ENCODE measurements at regions of chr6 and their contacts with region 1.

Region 1: GRCh38 chr6:53171605-53172446 is 23.2 kb upstream of the GCM1 start:
- DNase-seq: peak; percentile 73
- ATAC-seq: peak; percentile 100
- H3K4me3 ChIP-seq: no peak overlapping the region
- H3K27ac ChIP-seq: no peak overlapping the region
- H3K4me1 ChIP-seq: peaks cover 4% of the 10 kb centered on the region; the same call in 1 of the 2 replicates
- H3K27me3 ChIP-seq: no peaks in the 10 kb centered on the region; the same call in 1 of the 2 replicates
- CTCF ChIP-seq: peak; percentile 100
- POLR2A ChIP-seq: peak; percentile 70
- RAD21 ChIP-seq: peak; percentile 100

Region 2: DNA sequence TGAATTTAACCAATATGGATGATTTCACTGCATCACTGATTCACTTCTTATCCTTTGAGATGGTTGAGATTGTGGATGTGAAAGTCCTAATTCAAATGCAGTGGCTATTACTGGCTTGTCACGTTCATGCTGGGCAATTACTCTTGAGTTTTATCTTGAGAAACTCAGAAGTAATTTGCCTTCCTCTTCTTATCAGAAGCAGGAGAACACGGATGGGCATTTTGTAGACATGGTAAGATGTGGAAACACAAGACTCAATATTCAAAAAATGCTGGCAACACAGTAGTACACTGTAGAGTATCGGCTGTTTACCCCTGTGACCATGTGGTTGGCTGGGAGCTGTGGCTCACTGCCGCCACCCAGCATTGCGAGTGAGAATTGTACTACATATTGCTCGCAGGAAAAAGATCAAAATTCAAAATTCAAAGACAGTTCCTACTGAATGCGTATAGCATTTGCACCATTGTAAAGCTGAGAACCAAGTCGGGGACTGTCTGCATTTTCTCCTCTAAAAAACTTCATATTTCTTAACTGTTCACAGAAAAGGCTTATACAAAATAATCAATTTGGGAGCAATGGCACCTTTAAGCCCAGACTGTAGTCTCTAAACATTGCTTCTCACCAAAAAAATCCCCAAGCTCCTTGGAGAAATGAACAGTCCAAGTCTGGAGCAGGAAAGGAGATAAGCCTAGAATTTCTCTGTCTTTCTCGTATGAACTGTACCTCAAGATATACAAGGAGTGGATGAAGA is 238.9 kb after region 1 on chr6:
- CTCF ChIA-PET with region 1: interaction called, 8 read pairs
- POLR2A ChIA-PET with region 1: no interaction called
- dilution Hi-C with region 1: no loop called
- in situ Hi-C with region 1: no loop called
- intact Hi-C with region 1: loop called (anchors 2 kb)
- DNase-seq: peak; percentile 33
- ATAC-seq: peak; percentile 91
- H3K4me3 ChIP-seq: no peak overlapping the region
- H3K27ac ChIP-seq: no peak overlapping the region
- H3K4me1 ChIP-seq: no peaks in the 10 kb centered on the region
- H3K27me3 ChIP-seq: peaks cover 32% of the 10 kb centered on the region
- CTCF ChIP-seq: peak; percentile 62
- POLR2A ChIP-seq: no peak
- RAD21 ChIP-seq: peak; percentile 72

Region 3: DNA sequence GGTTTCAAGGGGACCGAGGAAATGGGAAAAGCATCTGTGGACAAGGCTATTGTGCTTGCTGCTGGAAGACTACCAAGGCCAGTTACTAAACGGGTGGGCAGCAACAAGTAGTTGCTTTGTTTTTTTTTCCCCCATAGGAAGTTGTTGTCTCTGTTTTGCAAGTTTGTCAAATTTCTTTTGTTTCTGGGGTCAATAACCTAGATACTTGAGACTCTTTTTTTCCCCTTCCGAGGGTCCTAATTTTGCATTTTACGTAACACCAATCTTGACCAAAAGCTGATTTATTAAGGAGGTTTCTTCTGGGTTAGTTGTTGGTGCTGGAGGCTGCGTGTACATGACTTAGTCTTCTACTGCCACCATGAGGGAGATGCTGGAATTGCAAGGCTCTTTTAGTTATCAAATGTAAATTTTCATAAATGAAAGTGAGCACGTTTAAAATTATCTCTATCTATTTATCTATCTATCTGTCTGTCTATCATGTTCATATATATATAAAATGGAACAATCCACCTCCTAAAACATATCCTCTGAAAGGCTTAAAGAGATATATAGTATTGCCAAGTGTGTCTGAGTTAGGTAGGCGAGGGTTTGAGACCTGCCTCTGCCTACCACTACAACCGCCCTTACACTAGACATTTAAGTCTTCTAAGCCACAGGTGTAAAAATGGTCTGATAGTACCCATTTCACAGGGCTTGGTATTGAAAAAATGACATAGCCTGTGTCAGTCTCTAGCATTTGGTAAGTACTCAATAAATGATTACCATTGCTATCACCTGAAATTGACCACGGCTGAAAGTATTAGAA is 312.9 kb after region 1 on chr6:
- CTCF ChIA-PET with region 1: interaction called, 7 read pairs
- POLR2A ChIA-PET with region 1: no interaction called
- dilution Hi-C with region 1: no loop called
- in situ Hi-C with region 1: loop called (anchors 5 kb)
- intact Hi-C with region 1: loop called (anchors 1 kb)
- DNase-seq: peak; percentile 75
- ATAC-seq: peak; percentile 88
- H3K4me3 ChIP-seq: no peak overlapping the region
- H3K27ac ChIP-seq: no peak overlapping the region
- H3K4me1 ChIP-seq: no peaks in the 10 kb centered on the region
- H3K27me3 ChIP-seq: peaks cover 17% of the 10 kb centered on the region
- CTCF ChIP-seq: peak; percentile 99
- POLR2A ChIP-seq: no peak
- RAD21 ChIP-seq: peak; percentile 97

Region 4: DNA sequence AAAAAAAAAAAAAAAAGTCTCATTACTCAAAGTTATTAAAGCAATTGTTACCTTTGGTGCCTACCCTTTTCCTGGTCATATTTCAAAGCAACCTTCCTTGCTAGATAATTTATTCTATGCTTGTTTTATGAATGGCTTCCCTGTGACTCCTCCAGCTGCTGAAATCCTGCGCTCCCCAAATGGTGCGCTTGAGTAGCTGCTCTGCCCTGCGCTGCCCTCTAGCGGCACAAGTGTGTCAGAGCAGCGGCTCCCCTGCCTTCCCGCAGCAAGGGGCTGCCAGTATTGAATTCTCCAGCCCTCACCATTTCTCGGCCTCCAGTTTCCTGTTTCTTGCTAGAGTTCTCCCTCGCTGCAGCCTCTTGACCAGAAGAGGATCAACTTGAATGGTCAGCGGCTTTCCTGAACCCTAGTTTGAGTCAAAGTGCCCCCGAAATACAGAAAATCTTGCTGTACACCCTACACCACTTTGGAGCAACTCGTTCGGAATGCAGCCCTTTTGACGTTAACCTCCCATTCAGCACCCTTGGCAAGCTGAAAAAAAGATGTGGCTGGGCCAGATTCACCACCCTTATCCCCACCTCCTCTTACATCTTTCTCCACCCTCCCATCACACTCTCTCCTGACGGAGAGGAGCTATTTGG is 554.1 kb after region 1 on chr6:
- CTCF ChIA-PET with region 1: no interaction called
- POLR2A ChIA-PET with region 1: no interaction called
- dilution Hi-C with region 1: no loop called
- in situ Hi-C with region 1: loop called (anchors 10 kb)
- intact Hi-C with region 1: loop called (anchors 5 kb)
- DNase-seq: peak; percentile 69
- ATAC-seq: peak; percentile 94
- H3K4me3 ChIP-seq: no peak overlapping the region
- H3K27ac ChIP-seq: no peak overlapping the region
- H3K4me1 ChIP-seq: peaks cover 3% of the 10 kb centered on the region; the same call in 1 of the 2 replicates
- H3K27me3 ChIP-seq: no peaks in the 10 kb centered on the region
- CTCF ChIP-seq: peak; percentile 95
- POLR2A ChIP-seq: no peak
- RAD21 ChIP-seq: peak; percentile 89

Measured in IMR-90 (cell line).